HCT116 (cell line): ENCODE measurements at regions of chr5 and their contacts with region 1.

Region 1: GRCh38 chr5:159581502-159582249 is 251.4 kb upstream of the IL12B start:
- DNase-seq: peak; percentile 94
- ATAC-seq: peak; percentile 68
- H3K4me3 ChIP-seq: no peak overlapping the region
- H3K27ac ChIP-seq: peak overlapping the region; percentile 49; the same call in 1 of the 2 replicates
- H3K4me1 ChIP-seq: peaks cover 28 to 40% of the 10 kb centered on the region in 2 experiments
- H3K27me3 ChIP-seq: no peaks in the 10 kb centered on the region
- CTCF ChIP-seq: peak in 2 of 3 experiments; percentile 23 to 39; a peak in 2 of 6 replicates
- POLR2A ChIP-seq: no peak
- RAD21 ChIP-seq: peak; percentile 54

Region 2: GRCh38 chr5:159451197-159452052 is 130.3 kb before region 1 on chr5:
- CTCF ChIA-PET with region 1: no interaction called
- POLR2A ChIA-PET with region 1: no interaction called
- RAD21 ChIA-PET with region 1: interaction called in 1 of 2 experiments, 3 read pairs
- intact Hi-C with region 1: loop called (anchors 5 kb)
- DNase-seq: peak; percentile 46
- ATAC-seq: peak; percentile 63
- H3K4me3 ChIP-seq: no peak overlapping the region
- H3K27ac ChIP-seq: no peak overlapping the region
- H3K4me1 ChIP-seq: peaks cover 22 to 31% of the 10 kb centered on the region in 2 experiments
- H3K27me3 ChIP-seq: no peaks in the 10 kb centered on the region
- CTCF ChIP-seq: no peak
- POLR2A ChIP-seq: no peak
- RAD21 ChIP-seq: no peak